PC-9 (cell line): ENCODE measurements at regions of chr5 and their contacts with region 1.

Region 1: DNA sequence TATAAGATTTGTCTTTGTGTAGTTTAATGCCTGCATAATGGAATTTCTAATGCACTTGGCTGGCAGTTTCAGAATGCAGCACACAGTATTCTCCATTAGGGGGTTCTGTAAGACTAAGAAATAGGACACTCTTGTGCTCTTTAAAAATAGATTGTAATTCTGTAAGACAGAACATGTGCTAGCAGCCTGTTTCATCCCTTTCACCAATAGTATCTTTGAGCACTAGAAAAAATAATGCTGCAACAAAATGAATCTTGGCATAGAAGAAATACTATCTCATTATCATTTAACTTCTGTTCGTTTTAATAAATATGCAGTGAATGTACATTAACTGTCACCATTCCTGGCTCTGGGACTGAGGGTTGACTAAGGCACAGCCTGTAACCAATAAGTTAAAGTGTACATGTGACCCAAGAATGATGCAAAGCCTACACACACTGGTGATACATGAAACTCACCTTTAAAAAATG is 23.8 kb upstream of the ZNF622 start:
- DNase-seq: peak; percentile 41 to 64
- H3K4me3 ChIP-seq: no peak overlapping the region
- H3K27ac ChIP-seq: no peak overlapping the region
- H3K4me1 ChIP-seq: peaks cover 26% of the 10 kb centered on the region
- H3K27me3 ChIP-seq: no peaks in the 10 kb centered on the region
- CTCF ChIP-seq: peak; percentile 88

Region 2: DNA sequence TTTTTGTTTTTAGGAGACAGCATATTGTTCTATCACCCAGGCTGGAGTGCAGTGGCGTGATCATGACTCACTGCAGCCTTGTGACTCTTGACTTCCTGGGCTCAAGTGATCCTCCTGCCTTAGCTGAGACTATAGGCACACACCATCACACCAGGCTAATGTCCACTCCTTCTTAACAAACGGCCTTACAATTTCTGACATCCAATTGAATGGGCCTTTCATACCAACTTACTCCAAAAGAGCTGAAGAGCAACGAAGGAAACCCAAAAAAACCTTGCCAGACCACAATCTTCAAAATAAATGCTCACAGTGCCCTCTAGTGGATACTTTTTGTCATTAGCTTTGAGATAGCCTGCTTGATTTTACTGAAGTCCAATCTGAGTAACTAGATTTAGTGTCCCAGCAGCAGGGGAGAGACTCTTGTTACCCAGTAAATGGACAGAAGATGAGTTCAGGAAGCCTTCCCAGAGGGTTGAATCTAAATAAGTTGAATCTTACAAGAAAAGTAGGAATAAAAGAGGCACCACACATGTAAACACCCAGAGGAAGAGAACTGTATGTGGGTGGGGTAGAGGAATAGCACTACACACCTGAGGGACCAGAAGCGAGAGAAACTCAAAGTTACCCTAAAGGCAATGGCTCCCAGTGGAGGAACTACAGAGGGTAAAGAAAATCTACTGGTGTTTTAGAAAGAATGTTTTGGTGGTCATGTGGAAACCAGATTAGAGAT is 33.1 kb before region 1 on chr5:
- CTCF ChIA-PET with region 1: no interaction called
- POLR2A ChIA-PET with region 1: no interaction called
- intact Hi-C with region 1: no loop called
- DNase-seq: peak; percentile 38 to 49
- H3K4me3 ChIP-seq: no peak overlapping the region
- H3K27ac ChIP-seq: no peak overlapping the region
- H3K4me1 ChIP-seq: no peaks in the 10 kb centered on the region
- H3K27me3 ChIP-seq: no peaks in the 10 kb centered on the region
- CTCF ChIP-seq: peak; percentile 95

Region 3: DNA sequence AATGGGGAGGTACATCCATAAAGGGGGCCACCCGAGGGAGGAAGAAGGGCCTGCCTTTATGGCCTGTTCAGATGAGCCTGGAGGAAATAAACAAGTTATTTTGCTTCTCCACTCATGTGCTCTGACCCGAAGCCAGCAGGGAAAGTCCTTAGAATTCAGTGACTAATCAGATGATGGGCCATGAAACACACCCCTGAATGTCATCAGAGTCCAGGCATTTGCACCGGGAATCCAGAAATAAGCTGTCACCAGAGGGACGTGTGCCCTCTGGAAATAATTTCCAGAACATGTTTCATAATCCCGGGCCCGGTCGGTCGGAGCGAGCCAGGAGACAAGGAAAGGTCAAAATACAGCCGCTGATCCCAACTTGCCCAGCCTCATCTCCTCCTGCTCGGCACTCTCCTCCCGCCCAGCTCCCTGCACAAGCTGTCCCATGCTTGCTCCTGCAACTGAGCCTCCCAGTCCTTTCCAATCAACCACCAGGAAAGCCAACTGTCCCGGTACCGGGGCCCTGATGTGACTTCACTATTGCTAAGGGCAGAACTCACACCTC is 49.9 kb after region 1 on chr5:
- CTCF ChIA-PET with region 1: interaction called, 12 read pairs
- POLR2A ChIA-PET with region 1: no interaction called
- intact Hi-C with region 1: loop called (anchors 2 kb)
- DNase-seq: peak; percentile 69 to 82
- H3K4me3 ChIP-seq: no peak overlapping the region
- H3K27ac ChIP-seq: peak overlapping the region; percentile 47
- H3K4me1 ChIP-seq: peaks cover 24% of the 10 kb centered on the region
- H3K27me3 ChIP-seq: no peaks in the 10 kb centered on the region
- CTCF ChIP-seq: no peak

Region 4: GRCh38 chr5:16577677-16578076 is 88.3 kb after region 1 on chr5:
- CTCF ChIA-PET with region 1: interaction called, 10 read pairs
- POLR2A ChIA-PET with region 1: no interaction called
- intact Hi-C with region 1: no loop called
- DNase-seq: no peak
- H3K4me3 ChIP-seq: no peak overlapping the region
- H3K27ac ChIP-seq: no peak overlapping the region
- H3K4me1 ChIP-seq: no peaks in the 10 kb centered on the region
- H3K27me3 ChIP-seq: peaks cover 15% of the 10 kb centered on the region; the same call in 1 of the 2 replicates
- CTCF ChIP-seq: no peak

Region 5: GRCh38 chr5:16600397-16600796 is 111.0 kb after region 1 on chr5:
- CTCF ChIA-PET with region 1: no interaction called
- POLR2A ChIA-PET with region 1: no interaction called
- intact Hi-C with region 1: no loop called
- DNase-seq: no peak
- H3K4me3 ChIP-seq: no peak overlapping the region
- H3K27ac ChIP-seq: no peak overlapping the region
- H3K4me1 ChIP-seq: no peaks in the 10 kb centered on the region
- H3K27me3 ChIP-seq: peaks cover 27% of the 10 kb centered on the region; the same call in 1 of the 2 replicates
- CTCF ChIP-seq: no peak

Region 6: GRCh38 chr5:16666883-16667398 is 177.6 kb after region 1 on chr5:
- CTCF ChIA-PET with region 1: interaction called, 9 read pairs
- POLR2A ChIA-PET with region 1: interaction called, 11 read pairs
- intact Hi-C with region 1: loop called (anchors 1 kb)
- DNase-seq: peak in 1 of 2 experiments; percentile 41
- H3K4me3 ChIP-seq: no peak overlapping the region
- H3K27ac ChIP-seq: no peak overlapping the region
- H3K4me1 ChIP-seq: no peaks in the 10 kb centered on the region
- H3K27me3 ChIP-seq: no peaks in the 10 kb centered on the region
- CTCF ChIP-seq: peak; percentile 62

Region 7: GRCh38 chr5:16791036-16791705 is 301.8 kb after region 1 on chr5:
- CTCF ChIA-PET with region 1: no interaction called
- POLR2A ChIA-PET with region 1: no interaction called
- intact Hi-C with region 1: loop called (anchors 5 kb)
- DNase-seq: peak; percentile 48 to 55
- H3K4me3 ChIP-seq: no peak overlapping the region
- H3K27ac ChIP-seq: no peak overlapping the region
- H3K4me1 ChIP-seq: no peaks in the 10 kb centered on the region
- H3K27me3 ChIP-seq: no peaks in the 10 kb centered on the region
- CTCF ChIP-seq: peak; percentile 92